Posterior cingulate gyrus (tissue), 11 donors: ENCODE measurements at regions of chr2 and their contacts with region 1.

Region 1: GRCh38 chr2:219530048-219530963 is 13.3 kb downstream of the CHPF start:
- DNase-seq: peak; percentile 78 to 99 (median 90)

Region 2: GRCh38 chr2:219402665-219403515 is 127.4 kb before region 1 on chr2:
- intact Hi-C with region 1: loop called (anchors 1 kb)
- DNase-seq: peak; percentile 34 to 94 (median 63)

Region 3: GRCh38 chr2:219459460-219460311 is 70.6 kb before region 1 on chr2:
- intact Hi-C with region 1: loop called (anchors 1 kb)
- DNase-seq: peak in 5 of 10 donors; percentile 54 to 92 (median 59)

Region 4: GRCh38 chr2:219475697-219476651 is 54.3 kb before region 1 on chr2:
- intact Hi-C with region 1: loop called (anchors 1 kb)
- DNase-seq: peak in 7 of 10 donors; percentile 35 to 96 (median 67)

Region 5: GRCh38 chr2:219498280-219499057 is 31.8 kb before region 1 on chr2 and contains the start of gene GMPPA:
- intact Hi-C with region 1: loop called (anchors 1 kb)
- DNase-seq: peak; percentile 86 to 99 (median 94)

Region 6: DNA sequence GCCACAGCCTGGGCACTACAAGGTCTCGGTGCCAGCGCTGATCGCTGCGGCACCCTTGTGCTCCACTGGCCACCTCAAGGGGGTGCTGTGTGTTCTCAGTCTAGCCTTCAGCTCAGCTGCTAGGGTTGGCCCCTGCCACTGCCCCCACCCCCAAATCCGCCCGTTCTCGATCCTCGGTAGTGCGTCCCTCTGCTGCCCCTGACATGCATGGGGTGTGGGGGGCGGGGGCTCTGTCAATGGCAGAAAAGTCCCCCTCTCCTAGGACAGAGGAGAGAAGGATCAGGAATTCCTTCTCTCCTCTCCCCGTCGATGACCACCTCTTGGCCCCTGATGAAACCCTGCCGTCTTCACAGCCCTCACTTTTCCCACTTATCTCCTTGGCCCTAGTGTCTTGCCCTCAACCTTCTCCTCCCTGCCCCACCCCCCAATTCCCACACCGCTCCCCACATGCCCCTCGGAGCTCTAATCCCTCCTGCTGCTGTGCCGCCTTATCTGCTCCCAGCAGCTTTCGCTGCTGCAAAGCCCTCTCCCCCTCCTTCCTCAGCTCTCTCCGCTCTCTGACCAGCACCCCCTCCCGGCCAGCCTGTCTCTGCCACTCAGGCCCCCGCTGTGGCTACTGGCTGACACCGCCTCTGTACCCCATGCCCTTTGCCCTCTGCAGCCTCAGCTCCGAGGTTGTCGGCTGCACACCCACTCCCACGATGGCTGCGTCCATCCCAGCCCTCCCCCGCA is 20.4 kb before region 1 on chr2:
- intact Hi-C with region 1: loop called (anchors 1 kb)
- DNase-seq: peak in 9 of 10 donors; percentile 39 to 94 (median 65)

Region 7: GRCh38 chr2:219823574-219823973 is 293.3 kb after region 1 on chr2:
- intact Hi-C with region 1: no loop called
- DNase-seq: no peak